B cell (primary cell): ENCODE measurements at regions of chr5 and their contacts with region 1.

Region 1: DNA sequence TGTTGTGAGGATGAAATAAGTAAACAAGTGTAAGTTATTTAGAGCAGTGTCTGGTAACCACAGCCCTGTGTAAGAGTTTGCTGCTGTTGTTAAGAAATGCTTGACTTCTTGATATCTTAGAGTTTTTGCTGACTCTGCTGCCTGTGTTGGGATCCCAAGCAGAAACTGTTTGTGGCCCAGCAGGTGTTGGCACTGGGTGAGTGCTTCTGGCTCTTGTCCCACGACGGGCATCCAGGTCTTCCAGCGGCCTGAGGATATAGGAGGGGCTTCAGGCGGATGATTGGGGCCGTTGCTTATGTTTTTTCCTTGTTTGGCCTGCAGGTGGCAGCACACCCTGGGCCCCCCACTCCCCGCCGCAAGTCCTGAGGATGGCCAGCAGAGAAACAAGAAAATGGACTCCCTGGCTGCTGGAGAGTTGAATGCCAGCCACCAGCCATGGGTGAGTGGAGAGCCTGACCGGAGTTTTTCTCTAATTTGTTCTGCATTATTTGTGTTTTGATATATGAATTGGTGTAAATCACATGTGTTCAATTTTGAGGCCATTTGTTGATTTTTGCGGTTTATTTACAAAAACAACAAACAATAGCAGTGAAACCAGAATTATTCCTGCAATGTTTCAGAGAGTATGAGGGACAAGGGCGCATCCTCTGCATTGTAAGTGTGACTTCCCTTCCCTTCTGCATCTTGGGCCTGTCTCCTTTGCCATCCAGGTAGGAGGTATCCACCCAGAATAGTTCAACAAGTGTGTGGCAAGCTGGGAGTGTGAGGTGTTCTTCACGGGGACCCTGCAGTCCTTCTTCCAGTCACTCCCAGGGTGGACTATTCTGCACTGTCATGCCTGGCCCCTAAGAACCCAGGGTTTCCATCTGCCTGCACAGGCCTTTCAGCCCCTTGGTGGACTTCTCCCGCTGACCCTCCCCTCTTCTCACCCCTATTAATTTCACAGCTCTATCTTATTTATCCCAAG is 50.3 kb downstream of the SLC22A5 start:
- DNase-seq: peak; percentile 81
- ATAC-seq: peak; percentile 34
- H3K4me3 ChIP-seq: peak overlapping the region in 1 of 5 experiments; percentile 51
- H3K4me3 Mint-ChIP-seq: peak overlapping the region; percentile 90
- H3K27ac ChIP-seq: peak overlapping the region; percentile 92 to 94
- H3K27ac Mint-ChIP-seq: peak overlapping the region; percentile 93
- H3K4me1 ChIP-seq: peaks cover 90 to 91% of the 10 kb centered on the region in 2 donors
- H3K4me1 Mint-ChIP-seq: peaks cover 95% of the 10 kb centered on the region
- H3K27me3 ChIP-seq: no peaks in the 10 kb centered on the region
- H3K27me3 Mint-ChIP-seq: no peaks in the 10 kb centered on the region
- CTCF ChIP-seq: peak; percentile 91

Region 2: GRCh38 chr5:131796793-131797693 is 622.7 kb before region 1 on chr5 and contains the start of gene FNIP1:
- CTCF ChIA-PET with region 1: no interaction called
- POLR2A ChIA-PET with region 1: no interaction called
- intact Hi-C with region 1: loop called (anchors 5 kb)
- DNase-seq: peak; percentile 98
- ATAC-seq: peak; percentile 93
- H3K4me3 ChIP-seq: peak within 1 kb of the TSS; percentile 66 to 82 (median 76)
- H3K4me3 Mint-ChIP-seq: peak within 1 kb of the TSS; percentile 98
- H3K27ac ChIP-seq: peak within 1 kb of the TSS; percentile 82 to 100
- H3K27ac Mint-ChIP-seq: peak within 1 kb of the TSS; percentile 96
- H3K4me1 ChIP-seq: peaks cover 15 to 21% of the 10 kb centered on the region in 2 donors
- H3K4me1 Mint-ChIP-seq: peaks cover 40% of the 10 kb centered on the region
- H3K27me3 ChIP-seq: no peaks in the 10 kb centered on the region
- H3K27me3 Mint-ChIP-seq: no peaks in the 10 kb centered on the region
- CTCF ChIP-seq: no peak
- total RNA-seq, gene FNIP1: 52.8 and 57.8 TPM in 2 replicates

Region 3: GRCh38 chr5:132466433-132467286 is 46.9 kb after region 1 on chr5:
- CTCF ChIA-PET with region 1: interaction called, 37 read pairs
- POLR2A ChIA-PET with region 1: interaction called, 35 read pairs
- intact Hi-C with region 1: no loop called
- DNase-seq: peak; percentile 72
- ATAC-seq: peak; percentile 61
- H3K4me3 ChIP-seq: peak overlapping the region; percentile 10 to 53 (median 35)
- H3K4me3 Mint-ChIP-seq: peak overlapping the region; percentile 62
- H3K27ac ChIP-seq: peak overlapping the region; percentile 70 to 72
- H3K27ac Mint-ChIP-seq: peak overlapping the region; percentile 77
- H3K4me1 ChIP-seq: peaks cover 71 to 83% of the 10 kb centered on the region in 2 donors
- H3K4me1 Mint-ChIP-seq: peaks cover 85% of the 10 kb centered on the region
- H3K27me3 ChIP-seq: no peaks in the 10 kb centered on the region
- H3K27me3 Mint-ChIP-seq: no peaks in the 10 kb centered on the region
- CTCF ChIP-seq: no peak

Region 4: GRCh38 chr5:132473019-132473531 is 53.3 kb after region 1 on chr5:
- CTCF ChIA-PET with region 1: interaction called, 59 read pairs
- POLR2A ChIA-PET with region 1: interaction called, 20 read pairs
- intact Hi-C with region 1: loop called (anchors 1 kb)
- DNase-seq: peak; percentile 88
- ATAC-seq: peak; percentile 86
- H3K4me3 ChIP-seq: no peak overlapping the region
- H3K4me3 Mint-ChIP-seq: peak overlapping the region; percentile 83
- H3K27ac ChIP-seq: peak overlapping the region; percentile 81 to 93
- H3K27ac Mint-ChIP-seq: peak overlapping the region; percentile 99
- H3K4me1 ChIP-seq: peaks cover 46 to 75% of the 10 kb centered on the region in 2 donors
- H3K4me1 Mint-ChIP-seq: peaks cover 78% of the 10 kb centered on the region
- H3K27me3 ChIP-seq: no peaks in the 10 kb centered on the region
- H3K27me3 Mint-ChIP-seq: no peaks in the 10 kb centered on the region
- CTCF ChIP-seq: no peak

Region 5: GRCh38 chr5:132490486-132491367 is 70.9 kb after region 1 on chr5 and contains the start of gene IRF1:
- CTCF ChIA-PET with region 1: interaction called, 121 read pairs
- POLR2A ChIA-PET with region 1: interaction called, 47 read pairs
- intact Hi-C with region 1: loop called (anchors 1 kb)
- DNase-seq: peak; percentile 98
- ATAC-seq: peak; percentile 70
- H3K4me3 ChIP-seq: peak within 1 kb of the TSS; percentile 81 to 99 (median 89)
- H3K4me3 Mint-ChIP-seq: peak within 1 kb of the TSS; percentile 96
- H3K27ac ChIP-seq: peak within 1 kb of the TSS; percentile 99
- H3K27ac Mint-ChIP-seq: peak within 1 kb of the TSS; percentile 96
- H3K4me1 ChIP-seq: peaks cover 74 to 81% of the 10 kb centered on the region in 2 donors
- H3K4me1 Mint-ChIP-seq: peaks cover 76% of the 10 kb centered on the region
- H3K27me3 ChIP-seq: no peaks in the 10 kb centered on the region
- H3K27me3 Mint-ChIP-seq: no peaks in the 10 kb centered on the region
- CTCF ChIP-seq: no peak
- total RNA-seq, gene IRF1: 304 and 306 TPM in 2 replicates

Region 6: DNA sequence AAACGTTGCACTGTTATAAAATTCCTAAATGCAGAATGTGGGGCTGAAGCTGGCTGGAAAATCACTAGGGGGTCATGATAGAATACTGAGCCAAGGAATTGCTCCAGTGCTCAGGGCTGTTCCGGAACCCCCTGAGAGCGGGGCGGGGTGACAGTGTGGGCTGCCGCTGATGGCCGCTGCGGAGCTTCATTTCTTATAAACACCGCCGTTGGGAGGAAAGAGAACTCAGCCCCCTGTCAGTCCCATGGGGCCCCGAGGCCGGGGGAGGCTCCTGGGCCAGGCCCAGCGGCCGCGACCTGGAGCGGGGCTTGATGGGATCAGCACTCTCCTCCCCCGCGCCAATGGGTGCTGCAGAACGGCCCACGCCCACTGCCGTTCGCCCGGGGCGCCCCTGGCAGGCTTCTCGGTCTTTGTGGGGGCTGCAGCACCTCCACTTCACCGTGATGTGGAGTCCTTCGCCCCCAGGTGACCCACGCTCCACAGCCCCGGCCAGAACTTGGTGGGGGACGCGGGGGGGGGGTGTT is 75.9 kb after region 1 on chr5:
- CTCF ChIA-PET with region 1: interaction called, 121 read pairs
- POLR2A ChIA-PET with region 1: interaction called, 47 read pairs
- intact Hi-C with region 1: loop called (anchors 1 kb)
- DNase-seq: peak; percentile 91
- ATAC-seq: peak; percentile 58
- H3K4me3 ChIP-seq: peak overlapping the region; percentile 42 to 91 (median 84)
- H3K4me3 Mint-ChIP-seq: peak overlapping the region; percentile 97
- H3K27ac ChIP-seq: peak overlapping the region; percentile 85 to 95
- H3K27ac Mint-ChIP-seq: peak overlapping the region; percentile 97
- H3K4me1 ChIP-seq: peaks cover 48 to 59% of the 10 kb centered on the region in 2 donors
- H3K4me1 Mint-ChIP-seq: peaks cover 68% of the 10 kb centered on the region
- H3K27me3 ChIP-seq: no peaks in the 10 kb centered on the region
- H3K27me3 Mint-ChIP-seq: no peaks in the 10 kb centered on the region
- CTCF ChIP-seq: no peak